A549 (cell line): ENCODE measurements at regions of chr12 and their contacts with region 1.

Region 1: DNA sequence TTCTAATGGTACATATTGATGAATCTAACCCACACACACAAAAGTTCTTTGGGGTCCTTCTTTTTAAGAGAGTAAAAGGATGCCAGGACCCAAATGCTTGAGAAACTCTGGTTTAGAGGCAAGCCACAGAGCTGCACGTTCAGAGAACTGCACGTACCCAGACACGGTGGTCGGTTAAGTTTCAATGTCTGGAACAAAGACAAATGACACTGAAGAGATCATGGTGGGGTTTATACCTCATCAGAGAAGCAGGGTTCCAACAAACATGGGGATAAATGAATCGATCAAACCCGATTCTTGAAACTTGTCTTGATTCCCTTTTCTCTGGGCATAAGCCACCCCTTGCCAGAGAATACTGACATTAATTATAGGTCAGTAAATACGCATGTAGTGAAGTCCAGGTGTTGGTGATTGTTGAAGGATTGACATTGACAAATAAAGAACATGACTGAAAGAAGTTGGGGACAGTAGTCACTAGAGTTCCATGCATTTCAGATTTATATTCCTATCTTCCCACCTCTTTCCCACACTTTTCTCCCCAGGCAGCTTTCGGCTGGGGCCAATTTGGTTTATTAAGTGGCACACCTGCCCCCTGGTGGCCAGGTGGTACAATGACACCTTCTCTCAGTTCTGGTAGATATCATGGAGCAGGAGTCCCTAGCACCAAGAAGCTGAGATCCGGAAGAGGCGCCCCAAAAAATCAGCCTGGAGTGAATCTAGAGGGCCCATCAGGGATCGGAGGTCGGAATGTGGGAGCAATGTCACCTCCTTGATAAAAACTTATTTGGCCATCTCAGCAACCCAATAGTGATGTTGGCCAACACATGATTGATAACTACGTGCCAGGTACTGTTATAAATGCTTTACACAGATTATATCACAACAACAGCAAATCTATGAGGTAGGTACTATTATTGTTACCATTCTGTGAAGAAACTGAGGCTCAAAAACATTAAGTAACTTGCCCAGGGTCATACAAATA is 17.8 kb upstream of the HDAC7 start:
- DNase-seq: peak; percentile 82 to 89
- ATAC-seq: peak; percentile 51 to 83; a peak in 5 of 6 replicates
- H3K4me3 ChIP-seq: no peak overlapping the region
- H3K27ac ChIP-seq: no peak overlapping the region; a peak in 1 of 6 replicates
- H3K4me1 ChIP-seq: 0 out of 3 replicates have a peak, but pooled peaks cover 3% of the 10 kb centered on the region
- CTCF ChIP-seq: peak; percentile 91
- EP300 ChIP-seq: no peak
- POLR2A ChIP-seq: no peak
- RAD21 ChIP-seq: peak; percentile 94 to 96

Region 2: GRCh38 chr12:47725893-47726292 is 111.6 kb before region 1 on chr12:
- CTCF ChIA-PET with region 1: interaction called, 15 read pairs
- POLR2A ChIA-PET with region 1: no interaction called
- DNase-seq: no peak
- ATAC-seq: no peak
- H3K4me3 ChIP-seq: no peak overlapping the region
- H3K27ac ChIP-seq: no peak overlapping the region
- H3K4me1 ChIP-seq: no peaks in the 10 kb centered on the region
- CTCF ChIP-seq: no peak
- EP300 ChIP-seq: no peak
- POLR2A ChIP-seq: no peak
- RAD21 ChIP-seq: no peak

Region 3: DNA sequence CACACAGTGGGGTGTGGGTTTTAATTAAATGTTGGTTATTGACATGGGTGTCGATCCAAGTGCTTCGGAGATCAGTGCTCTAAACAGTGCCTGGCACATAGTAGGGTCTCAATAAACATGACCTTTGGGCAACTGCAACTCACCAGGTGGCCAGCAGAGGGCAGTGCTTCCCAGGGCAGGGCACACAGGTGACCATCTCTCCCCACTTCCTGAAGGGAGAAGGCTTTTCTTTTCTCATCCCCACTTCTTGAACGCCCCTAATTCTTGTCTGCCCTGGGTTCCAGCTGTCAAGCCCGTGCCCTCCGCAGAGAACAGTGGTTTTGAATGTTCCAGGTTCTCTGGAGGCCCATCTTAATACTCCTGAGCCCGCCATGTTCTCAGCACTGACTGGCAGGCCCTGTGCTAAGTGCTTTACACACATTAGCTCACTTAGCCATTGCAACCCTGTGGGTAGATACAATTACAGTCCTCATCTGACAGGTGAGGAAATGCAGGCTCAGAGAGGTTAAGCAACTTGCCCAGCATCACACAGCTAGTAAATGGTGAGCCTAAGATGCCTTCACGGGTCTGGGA is 95.1 kb before region 1 on chr12:
- CTCF ChIA-PET with region 1: interaction called, 259 read pairs
- POLR2A ChIA-PET with region 1: no interaction called
- DNase-seq: peak; percentile 63 to 67
- ATAC-seq: peak; percentile 12 to 75; a peak in 3 of 6 replicates
- H3K4me3 ChIP-seq: no peak overlapping the region
- H3K27ac ChIP-seq: no peak overlapping the region
- H3K4me1 ChIP-seq: peaks cover 8% of the 10 kb centered on the region
- CTCF ChIP-seq: peak; percentile 98
- EP300 ChIP-seq: no peak
- POLR2A ChIP-seq: no peak
- RAD21 ChIP-seq: peak; percentile 93 to 97

Region 4: DNA sequence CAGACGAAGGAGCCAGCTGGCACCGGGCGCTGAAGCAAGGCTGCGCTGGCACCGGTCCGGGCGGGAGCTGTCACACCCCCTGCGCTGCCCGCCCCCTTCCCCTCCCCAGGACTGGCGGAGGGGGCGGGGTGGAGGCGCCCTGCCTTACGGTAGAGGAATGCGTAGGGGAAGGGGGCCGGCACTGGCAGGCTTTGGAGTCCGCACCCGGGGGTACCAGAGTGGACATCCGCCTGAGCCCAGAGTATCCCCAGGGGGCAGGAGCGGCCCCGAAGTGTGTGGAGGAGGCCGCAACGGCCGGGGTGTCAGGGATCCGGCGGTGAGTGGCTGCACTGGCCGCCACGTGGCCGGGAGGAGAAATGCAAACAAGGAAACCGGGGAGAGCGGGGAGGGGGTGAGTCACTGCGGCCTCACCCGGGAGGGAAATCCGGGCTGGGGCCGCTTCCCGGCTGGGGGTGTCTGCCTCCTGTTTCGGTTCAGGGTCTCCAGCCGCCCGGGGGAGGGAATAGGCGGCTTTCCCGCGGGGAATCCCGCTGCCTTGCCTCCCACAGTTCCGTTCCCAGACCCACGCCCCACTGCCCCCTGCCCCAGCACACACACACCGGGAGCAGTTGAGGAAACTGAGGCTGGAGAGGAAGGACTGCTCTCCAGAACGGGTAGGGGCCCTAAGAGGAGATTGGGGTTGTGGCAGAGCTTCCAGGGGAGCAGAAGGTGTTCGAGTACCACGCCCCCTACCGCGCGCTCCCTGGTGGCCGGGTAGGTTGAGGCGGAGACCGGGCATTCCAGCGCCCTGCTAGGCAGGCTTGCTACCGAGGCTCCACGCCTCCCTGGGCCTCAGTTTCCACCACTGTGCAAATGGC is 78.4 kb before region 1 on chr12 and contains the start of gene RAPGEF3:
- CTCF ChIA-PET with region 1: interaction called, 51 read pairs
- POLR2A ChIA-PET with region 1: no interaction called
- DNase-seq: peak; percentile 82 to 92
- ATAC-seq: peak; percentile 87 to 94
- H3K4me3 ChIP-seq: peak within 1 kb of the TSS; percentile 58
- H3K27ac ChIP-seq: peak within 1 kb of the TSS; percentile 80 to 94
- H3K4me1 ChIP-seq: peaks cover 10% of the 10 kb centered on the region
- CTCF ChIP-seq: peak; percentile 62
- EP300 ChIP-seq: no peak
- POLR2A ChIP-seq: peak; percentile 9; the same call in 1 of the 2 replicates
- RAD21 ChIP-seq: 0 out of 5 replicates have a peak, but pooled peaks of 1 of the 2 experiments have one; percentile 15
- polyA plus RNA-seq, gene RAPGEF3: 0.70 and 0.75 TPM in 2 replicates

Region 5: GRCh38 chr12:47819896-47820630 is 17.4 kb before region 1 on chr12 and contains the start of gene HDAC7:
- CTCF ChIA-PET with region 1: interaction called, 1,532 read pairs
- POLR2A ChIA-PET with region 1: interaction called, 20 read pairs
- DNase-seq: peak; percentile 86 to 90
- ATAC-seq: peak; percentile 52 to 74
- H3K4me3 ChIP-seq: peak within 1 kb of the TSS; percentile 89
- H3K27ac ChIP-seq: peak within 1 kb of the TSS; percentile 96 to 100
- H3K4me1 ChIP-seq: peaks cover 68% of the 10 kb centered on the region
- CTCF ChIP-seq: no peak
- EP300 ChIP-seq: 0 out of 5 replicates have a peak, but pooled peaks have one; percentile 23 to 29
- POLR2A ChIP-seq: peak; percentile 82
- RAD21 ChIP-seq: no peak
- polyA plus RNA-seq, gene HDAC7: 17.2 and 20.8 TPM in 2 replicates

Region 6: GRCh38 chr12:47875746-47876439 is 38.4 kb after region 1 on chr12:
- CTCF ChIA-PET with region 1: interaction called, 13 read pairs
- POLR2A ChIA-PET with region 1: no interaction called
- DNase-seq: no peak
- ATAC-seq: no peak
- H3K4me3 ChIP-seq: no peak overlapping the region
- H3K27ac ChIP-seq: no peak overlapping the region
- H3K4me1 ChIP-seq: no peaks in the 10 kb centered on the region
- CTCF ChIP-seq: no peak
- EP300 ChIP-seq: no peak
- POLR2A ChIP-seq: no peak
- RAD21 ChIP-seq: no peak